Cardiac septum (tissue), 1 donor: ENCODE measurements at regions of chr5 and their contacts with region 1.

Region 1: GRCh38 chr5:96934708-96935558 is 947 bp upstream of the LNPEP start:
- DNase-seq: peak; percentile 96

Region 2: DNA sequence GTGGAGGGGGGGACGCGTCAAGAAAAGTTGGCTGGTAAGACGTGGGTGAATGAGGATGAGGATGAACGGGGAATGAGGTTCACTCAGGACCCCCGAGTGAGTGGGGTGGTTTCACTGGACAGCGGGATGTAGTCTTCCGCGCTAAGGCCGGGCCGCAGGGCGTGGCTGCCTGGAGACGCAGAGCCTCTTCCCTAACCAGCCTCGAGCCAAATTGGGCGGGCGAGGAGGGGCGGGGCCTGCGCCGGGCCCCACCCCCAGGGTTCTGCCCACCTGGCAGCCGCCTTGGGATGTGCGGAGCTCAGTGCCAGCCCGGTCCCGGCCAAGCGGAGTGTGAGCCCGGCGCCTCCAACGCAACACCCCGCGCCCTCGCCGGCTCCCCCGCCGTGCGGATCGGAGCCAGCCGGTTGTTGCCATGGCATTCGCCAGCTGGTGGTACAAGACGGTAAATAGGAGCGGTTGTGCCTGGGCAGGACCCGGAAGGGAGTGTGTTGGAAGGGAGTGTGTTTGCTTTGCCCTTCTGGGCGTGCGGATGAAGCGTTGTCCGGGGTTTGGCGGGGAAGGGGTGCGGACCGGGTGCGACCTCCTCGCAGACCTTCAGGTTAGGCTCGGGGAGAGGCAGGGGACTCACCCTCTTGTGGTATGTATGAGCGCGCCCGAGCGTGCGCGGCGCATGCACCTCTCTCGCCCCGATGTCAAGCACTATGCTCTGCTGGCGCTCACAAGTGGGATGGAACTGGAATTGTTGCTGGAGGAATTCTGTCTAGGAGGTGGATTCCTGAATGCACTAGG is 272.0 kb before region 1 on chr5:
- intact Hi-C with region 1: loop called (anchors 2 kb)
- DNase-seq: peak; percentile 98

Region 3: GRCh38 chr5:96743065-96743768 is 191.7 kb before region 1 on chr5:
- intact Hi-C with region 1: loop called (anchors 10 kb)
- DNase-seq: peak; percentile 80

Region 4: GRCh38 chr5:96807075-96807654 is 127.8 kb before region 1 on chr5:
- intact Hi-C with region 1: loop called (anchors 2 kb)
- DNase-seq: peak; percentile 92

Region 5: GRCh38 chr5:96876292-96876850 is 58.6 kb before region 1 on chr5 and contains the start of gene ERAP2:
- intact Hi-C with region 1: loop called (anchors 5 kb)
- DNase-seq: no peak
- total RNA-seq, gene ERAP2: 4.8 TPM

Region 6: DNA sequence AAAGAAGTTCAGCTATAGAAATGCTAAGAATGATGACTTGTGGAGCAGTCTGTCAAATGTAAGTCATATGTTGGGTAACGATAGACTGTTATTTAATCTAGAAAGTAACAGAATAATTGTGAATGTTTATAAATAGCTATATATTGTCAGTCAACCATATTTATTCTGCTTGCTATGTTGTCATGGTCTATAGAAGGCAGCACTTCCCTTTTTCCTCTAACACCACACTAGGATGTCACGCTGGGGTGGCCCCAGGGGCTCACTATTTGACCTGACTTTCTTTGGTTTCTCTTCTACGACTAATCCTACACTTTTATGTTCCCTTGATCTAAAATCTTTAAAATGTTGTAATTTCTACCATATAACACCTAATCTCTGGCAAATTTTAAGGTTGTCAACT is 38.1 kb before region 1 on chr5:
- intact Hi-C with region 1: no loop called
- DNase-seq: no peak

Region 7: GRCh38 chr5:96973532-96974401 is 38.8 kb after region 1 on chr5:
- intact Hi-C with region 1: loop called (anchors 5 kb)
- DNase-seq: no peak

Region 8: DNA sequence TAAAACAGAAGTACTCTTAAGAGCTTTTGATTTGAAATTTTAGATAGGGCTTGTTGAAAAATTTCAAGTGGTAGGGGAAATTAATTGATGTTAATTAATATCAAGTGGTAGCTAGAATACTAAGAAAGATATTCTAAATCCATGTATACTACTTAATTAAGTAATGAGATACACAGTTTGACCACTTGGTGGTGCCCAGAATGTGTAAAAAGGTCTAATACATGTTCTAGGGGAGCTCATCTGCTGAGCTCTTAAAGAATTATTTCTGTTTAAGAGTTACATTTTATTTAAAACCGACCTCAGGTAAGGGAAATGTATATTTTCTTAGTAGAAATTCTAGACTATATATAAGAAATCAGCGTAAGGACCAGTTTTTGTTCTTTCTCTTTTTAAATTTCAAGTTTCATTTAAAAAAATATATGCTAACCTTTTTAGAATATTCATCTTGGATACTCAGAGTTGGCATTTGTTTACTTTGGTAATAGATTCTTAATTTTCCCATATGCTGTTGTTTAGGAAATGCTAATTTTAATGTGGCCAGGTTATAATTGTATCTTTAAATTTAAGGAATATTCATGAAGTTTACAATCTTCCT is 62.4 kb after region 1 on chr5:
- intact Hi-C with region 1: no loop called
- DNase-seq: no peak